Naive thymus-derived CD4-positive, alpha-beta T cell (primary cell): ENCODE measurements at regions of chr3 and their contacts with region 1.

Region 1: DNA sequence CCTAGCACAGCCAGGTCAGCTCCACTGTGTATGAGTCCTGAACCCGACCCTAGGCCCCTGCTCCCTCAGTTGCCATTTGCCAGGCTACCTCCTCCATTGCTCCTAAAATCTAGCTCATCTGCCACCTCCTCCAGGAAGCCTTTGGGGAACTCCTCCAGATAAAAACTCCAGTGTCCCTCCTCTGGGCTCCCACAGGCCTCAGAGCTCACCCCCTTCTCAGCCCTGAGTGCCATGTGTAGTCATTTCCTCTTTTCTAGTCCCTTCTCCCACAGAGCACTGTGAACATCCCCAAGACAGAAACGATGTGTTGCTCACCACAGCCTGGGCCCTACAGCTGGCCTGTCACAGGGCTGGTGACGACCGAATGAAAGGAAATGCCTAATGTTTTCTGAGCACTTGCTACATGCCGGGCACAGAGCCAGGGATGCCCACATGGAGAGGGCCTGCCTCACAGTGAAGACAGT is 61.0 kb downstream of the IQSEC1 start:
- DNase-seq: peak in 2 of 9 donors; percentile 24 to 52
- ATAC-seq: peak; percentile 60
- H3K4me3 ChIP-seq: peak overlapping the region; percentile 38
- H3K4me3 Mint-ChIP-seq: peak overlapping the region; percentile 69 to 96 (median 84)
- H3K27ac ChIP-seq: peak overlapping the region; percentile 99
- H3K27ac Mint-ChIP-seq: peak overlapping the region; percentile 96 to 100 (median 98)
- H3K4me1 ChIP-seq: peaks cover 84 to 90% of the 10 kb centered on the region in 2 donors
- H3K4me1 Mint-ChIP-seq: peaks cover 72 to 92% (median 77%) of the 10 kb centered on the region in 7 donors
- H3K27me3 ChIP-seq: no peaks in the 10 kb centered on the region
- H3K27me3 Mint-ChIP-seq: no peaks in the 10 kb centered on the region

Region 2: DNA sequence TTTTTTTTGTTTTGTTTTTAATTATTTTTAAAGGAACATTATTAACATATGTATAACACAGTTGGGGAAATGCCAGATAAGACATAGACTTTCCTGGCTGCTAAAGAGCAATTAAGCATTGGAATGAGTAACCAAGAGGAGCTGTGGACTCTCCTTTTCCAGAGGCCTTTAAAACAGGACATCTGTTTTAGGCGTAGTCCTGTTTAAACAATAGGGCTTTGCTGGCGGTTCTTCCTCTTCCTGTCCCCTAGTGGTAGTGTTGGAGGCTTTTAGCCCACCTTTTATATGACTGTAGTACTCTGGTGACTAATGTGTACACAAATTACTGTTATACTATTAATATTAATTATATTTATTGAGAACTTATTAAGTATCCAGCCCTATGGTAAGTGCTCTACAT is 641.5 kb before region 1 on chr3:
- CTCF ChIA-PET with region 1: no interaction called
- POLR2A ChIA-PET with region 1: no interaction called
- intact Hi-C with region 1: no loop called
- DNase-seq: no peak
- ATAC-seq: no peak
- H3K4me3 ChIP-seq: no peak overlapping the region
- H3K4me3 Mint-ChIP-seq: no peak overlapping the region
- H3K27ac ChIP-seq: no peak overlapping the region
- H3K27ac Mint-ChIP-seq: no peak overlapping the region
- H3K4me1 ChIP-seq: no peaks in the 10 kb centered on the region
- H3K4me1 Mint-ChIP-seq: no peaks in the 10 kb centered on the region
- H3K27me3 ChIP-seq: no peaks in the 10 kb centered on the region
- H3K27me3 Mint-ChIP-seq: peaks cover 24 to 32% (median 28%) of the 10 kb centered on the region in 5 donors

Region 3: DNA sequence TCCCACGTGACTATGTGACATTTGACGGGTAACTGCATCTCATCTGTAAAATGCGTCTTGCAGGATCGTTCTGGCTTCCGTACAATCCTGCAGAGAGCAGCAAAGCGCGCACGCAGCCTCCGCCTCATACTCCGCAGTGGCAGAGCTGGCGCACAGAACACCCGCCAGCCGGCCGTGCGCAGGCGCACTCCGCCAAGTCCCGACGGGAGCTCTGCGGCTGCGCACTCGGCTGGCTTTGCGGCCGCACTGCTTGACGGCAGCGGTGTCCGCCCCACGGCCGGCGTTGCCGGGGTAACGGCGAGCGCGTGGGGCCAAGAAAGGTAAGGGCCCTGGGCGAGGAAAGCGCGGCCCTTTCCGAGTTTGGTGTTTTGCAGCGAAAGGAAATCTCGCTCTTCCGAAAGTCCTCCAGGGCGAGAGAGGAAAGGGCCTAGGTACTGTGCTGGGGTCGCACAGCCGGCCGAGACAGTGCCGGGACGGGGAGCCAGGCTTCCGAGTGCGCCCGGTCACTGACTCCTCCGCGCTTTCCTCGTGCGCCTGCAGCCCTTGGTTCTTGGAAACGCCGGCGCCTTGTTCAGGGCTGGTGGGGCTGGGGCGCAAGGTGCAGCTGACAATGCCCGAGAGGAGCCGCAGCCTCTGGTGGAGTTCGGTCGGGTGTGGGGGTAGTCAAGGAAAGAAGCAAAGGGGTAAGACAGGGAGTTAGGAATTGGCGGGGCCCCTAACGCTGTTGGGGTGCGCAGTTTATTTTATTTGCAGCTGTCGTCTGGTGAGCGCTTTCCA is 527.9 kb before region 1 on chr3 and contains the start of gene TSEN2:
- CTCF ChIA-PET with region 1: no interaction called
- POLR2A ChIA-PET with region 1: no interaction called
- intact Hi-C with region 1: loop called in 1 of 2 experiments (anchors 10 kb)
- DNase-seq: peak; percentile 95 to 100 (median 98)
- ATAC-seq: peak; percentile 96
- H3K4me3 ChIP-seq: peak within 1 kb of the TSS; percentile 76
- H3K4me3 Mint-ChIP-seq: peak within 1 kb of the TSS; percentile 87 to 99 (median 97)
- H3K27ac ChIP-seq: peak within 1 kb of the TSS; percentile 92
- H3K27ac Mint-ChIP-seq: peak within 1 kb of the TSS; percentile 96 to 99 (median 98)
- H3K4me1 ChIP-seq: peaks cover 17% of the 10 kb centered on the region in 2 donors
- H3K4me1 Mint-ChIP-seq: peaks cover 21 to 65% (median 44%) of the 10 kb centered on the region in 7 donors
- H3K27me3 ChIP-seq: no peaks in the 10 kb centered on the region
- H3K27me3 Mint-ChIP-seq: peaks cover 0 to 2% (median 0%) of the 10 kb centered on the region in 5 donors
- total RNA-seq, gene TSEN2: 12.1 to 27.5 (median 13.6) TPM

Region 4: GRCh38 chr3:12994607-12995388 is 17.5 kb before region 1 on chr3:
- CTCF ChIA-PET with region 1: interaction called, 23 read pairs
- POLR2A ChIA-PET with region 1: interaction called, 41 read pairs
- intact Hi-C with region 1: loop called (anchors 1 kb)
- DNase-seq: peak; percentile 76 to 92 (median 83)
- ATAC-seq: peak; percentile 86
- H3K4me3 ChIP-seq: peak overlapping the region; percentile 69
- H3K4me3 Mint-ChIP-seq: peak overlapping the region; percentile 91 to 97 (median 95)
- H3K27ac ChIP-seq: peak overlapping the region; percentile 77
- H3K27ac Mint-ChIP-seq: peak overlapping the region; percentile 85 to 96 (median 90)
- H3K4me1 ChIP-seq: peaks cover 20 to 30% of the 10 kb centered on the region in 2 donors
- H3K4me1 Mint-ChIP-seq: peaks cover 23 to 80% (median 71%) of the 10 kb centered on the region in 7 donors
- H3K27me3 ChIP-seq: no peaks in the 10 kb centered on the region
- H3K27me3 Mint-ChIP-seq: peaks cover 0 to 5% (median 0%) of the 10 kb centered on the region in 5 donors

Region 5: DNA sequence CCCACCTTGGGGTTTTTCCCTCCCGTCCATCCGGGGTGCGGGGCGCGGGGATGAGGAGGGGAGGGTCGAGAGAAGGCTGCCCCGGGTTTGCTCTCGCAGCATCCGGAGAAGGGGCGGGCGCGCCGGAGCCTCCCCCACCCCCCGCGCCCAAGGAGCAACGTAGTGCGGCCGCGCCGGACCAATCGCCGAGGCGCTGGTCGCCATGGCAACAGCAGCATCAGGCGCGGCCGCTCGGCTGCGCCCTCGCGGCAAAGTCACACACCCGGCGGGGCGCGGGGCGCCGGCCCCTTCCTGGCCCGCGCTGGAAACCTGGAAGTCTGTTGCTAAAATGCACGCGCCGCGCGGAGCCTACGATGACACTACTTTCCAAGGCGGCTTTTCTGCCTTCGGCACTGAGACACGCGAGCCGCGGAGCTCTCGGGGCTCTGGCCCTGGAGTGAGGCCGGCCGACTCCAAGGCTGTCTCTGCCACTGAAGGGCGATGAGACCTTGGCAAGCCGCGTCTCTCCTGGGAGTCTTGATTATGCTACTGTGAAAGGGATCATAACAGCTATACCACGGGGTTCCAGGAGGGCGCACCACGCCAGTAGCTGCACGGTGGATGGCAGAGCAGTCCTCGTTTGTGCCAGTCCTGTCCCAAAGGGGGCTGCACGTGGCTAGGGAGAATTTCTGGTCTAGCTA is 61.2 kb after region 1 on chr3 and contains the start of gene IQSEC1:
- CTCF ChIA-PET with region 1: no interaction called
- POLR2A ChIA-PET with region 1: interaction called, 3 read pairs
- intact Hi-C with region 1: loop called (anchors 1 kb)
- DNase-seq: peak; percentile 15 to 70 (median 51)
- ATAC-seq: peak; percentile 80
- H3K4me3 ChIP-seq: peak within 1 kb of the TSS; percentile 53
- H3K4me3 Mint-ChIP-seq: peak within 1 kb of the TSS; percentile 59 to 86 (median 77)
- H3K27ac ChIP-seq: no peak within 1 kb of the TSS
- H3K27ac Mint-ChIP-seq: peak within 1 kb of the TSS in 6 of 9 donors; percentile 36 to 77 (median 60)
- H3K4me1 ChIP-seq: peaks cover 28 to 35% of the 10 kb centered on the region in 2 donors
- H3K4me1 Mint-ChIP-seq: peaks cover 18 to 46% (median 39%) of the 10 kb centered on the region in 7 donors
- H3K27me3 ChIP-seq: peaks cover 0 to 3% of the 10 kb centered on the region in 2 donors
- H3K27me3 Mint-ChIP-seq: peaks cover 8 to 45% (median 12%) of the 10 kb centered on the region in 5 donors
- total RNA-seq, gene IQSEC1: 51.8 to 163 (median 79.5) TPM

Region 6: GRCh38 chr3:13419505-13420044 is 407.3 kb after region 1 on chr3:
- CTCF ChIA-PET with region 1: no interaction called
- POLR2A ChIA-PET with region 1: interaction called, 3 read pairs
- intact Hi-C with region 1: loop called (anchors 1 to 5 kb)
- DNase-seq: peak; percentile 58 to 69 (median 64)
- ATAC-seq: peak; percentile 74
- H3K4me3 ChIP-seq: peak overlapping the region; percentile 70
- H3K4me3 Mint-ChIP-seq: peak overlapping the region; percentile 77 to 100 (median 90)
- H3K27ac ChIP-seq: peak overlapping the region; percentile 96
- H3K27ac Mint-ChIP-seq: peak overlapping the region; percentile 83 to 97 (median 92)
- H3K4me1 ChIP-seq: peaks cover 55 to 60% of the 10 kb centered on the region in 2 donors
- H3K4me1 Mint-ChIP-seq: peaks cover 41 to 81% (median 69%) of the 10 kb centered on the region in 7 donors
- H3K27me3 ChIP-seq: no peaks in the 10 kb centered on the region
- H3K27me3 Mint-ChIP-seq: no peaks in the 10 kb centered on the region

Region 7: GRCh38 chr3:13584427-13585300 is 572.4 kb after region 1 on chr3:
- CTCF ChIA-PET with region 1: no interaction called
- POLR2A ChIA-PET with region 1: no interaction called
- intact Hi-C with region 1: no loop called
- DNase-seq: no peak
- ATAC-seq: no peak
- H3K4me3 ChIP-seq: no peak overlapping the region
- H3K4me3 Mint-ChIP-seq: no peak overlapping the region
- H3K27ac ChIP-seq: no peak overlapping the region
- H3K27ac Mint-ChIP-seq: no peak overlapping the region
- H3K4me1 ChIP-seq: no peaks in the 10 kb centered on the region
- H3K4me1 Mint-ChIP-seq: no peaks in the 10 kb centered on the region
- H3K27me3 ChIP-seq: no peaks in the 10 kb centered on the region
- H3K27me3 Mint-ChIP-seq: no peaks in the 10 kb centered on the region

Region 8: DNA sequence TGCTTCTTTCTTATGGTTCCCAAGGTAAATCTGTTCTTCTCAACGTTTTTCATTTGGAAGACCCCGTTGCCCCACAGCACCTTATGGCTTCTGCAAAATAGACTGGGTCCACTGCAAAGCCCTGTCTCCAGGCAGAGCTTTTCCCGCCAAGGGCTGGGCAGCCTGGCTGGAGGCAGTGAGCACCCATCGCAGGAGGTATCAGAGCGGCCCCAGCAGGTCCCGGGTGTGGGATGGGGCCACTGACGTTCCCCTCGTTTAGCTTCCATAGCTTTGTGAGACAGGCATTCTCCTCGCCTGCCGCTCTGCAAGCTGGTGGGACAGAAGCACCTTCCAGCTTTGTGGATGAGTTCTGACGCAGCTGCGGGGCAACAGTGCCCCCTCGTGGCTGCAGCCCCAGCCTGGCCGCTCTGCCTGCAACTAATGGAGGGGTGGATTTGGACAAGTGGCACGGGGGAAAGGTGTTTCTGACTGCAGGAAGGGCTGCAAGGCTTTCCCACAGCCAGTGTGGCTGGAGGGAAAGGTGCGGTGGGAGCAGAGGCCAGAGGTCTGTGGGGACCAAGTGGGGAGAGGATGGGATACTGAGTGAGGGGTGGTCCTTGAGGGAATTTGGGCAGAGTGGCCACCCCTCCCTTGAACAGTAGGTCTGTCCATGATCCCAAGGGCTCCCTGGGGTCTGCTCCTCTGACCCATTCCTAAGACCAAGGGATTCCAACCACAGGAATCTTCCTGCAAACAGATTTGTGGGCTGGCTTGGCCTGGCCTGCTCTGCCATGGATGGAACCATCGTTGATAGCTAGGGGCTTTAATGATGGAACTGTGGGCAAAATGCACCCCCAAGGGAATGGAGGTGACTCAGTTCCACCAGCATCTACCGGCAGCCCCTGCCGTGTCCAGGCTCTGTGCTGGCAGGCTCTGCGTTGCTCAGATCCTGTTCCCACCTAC is 636.1 kb after region 1 on chr3:
- CTCF ChIA-PET with region 1: interaction called, 3 read pairs
- POLR2A ChIA-PET with region 1: no interaction called
- intact Hi-C with region 1: loop called in 1 of 2 experiments (anchors 10 kb)
- DNase-seq: peak; percentile 50 to 82 (median 72)
- ATAC-seq: peak; percentile 62
- H3K4me3 ChIP-seq: no peak overlapping the region
- H3K4me3 Mint-ChIP-seq: peak overlapping the region in 7 of 10 donors; percentile 17 to 64 (median 41)
- H3K27ac ChIP-seq: no peak overlapping the region
- H3K27ac Mint-ChIP-seq: peak overlapping the region in 2 of 9 donors; percentile 57 to 87
- H3K4me1 ChIP-seq: peaks cover 9 to 12% of the 10 kb centered on the region in 2 donors
- H3K4me1 Mint-ChIP-seq: peaks cover 14 to 40% (median 23%) of the 10 kb centered on the region in 7 donors
- H3K27me3 ChIP-seq: no peaks in the 10 kb centered on the region
- H3K27me3 Mint-ChIP-seq: peaks cover 15 to 48% (median 20%) of the 10 kb centered on the region in 5 donors

Region 9: DNA sequence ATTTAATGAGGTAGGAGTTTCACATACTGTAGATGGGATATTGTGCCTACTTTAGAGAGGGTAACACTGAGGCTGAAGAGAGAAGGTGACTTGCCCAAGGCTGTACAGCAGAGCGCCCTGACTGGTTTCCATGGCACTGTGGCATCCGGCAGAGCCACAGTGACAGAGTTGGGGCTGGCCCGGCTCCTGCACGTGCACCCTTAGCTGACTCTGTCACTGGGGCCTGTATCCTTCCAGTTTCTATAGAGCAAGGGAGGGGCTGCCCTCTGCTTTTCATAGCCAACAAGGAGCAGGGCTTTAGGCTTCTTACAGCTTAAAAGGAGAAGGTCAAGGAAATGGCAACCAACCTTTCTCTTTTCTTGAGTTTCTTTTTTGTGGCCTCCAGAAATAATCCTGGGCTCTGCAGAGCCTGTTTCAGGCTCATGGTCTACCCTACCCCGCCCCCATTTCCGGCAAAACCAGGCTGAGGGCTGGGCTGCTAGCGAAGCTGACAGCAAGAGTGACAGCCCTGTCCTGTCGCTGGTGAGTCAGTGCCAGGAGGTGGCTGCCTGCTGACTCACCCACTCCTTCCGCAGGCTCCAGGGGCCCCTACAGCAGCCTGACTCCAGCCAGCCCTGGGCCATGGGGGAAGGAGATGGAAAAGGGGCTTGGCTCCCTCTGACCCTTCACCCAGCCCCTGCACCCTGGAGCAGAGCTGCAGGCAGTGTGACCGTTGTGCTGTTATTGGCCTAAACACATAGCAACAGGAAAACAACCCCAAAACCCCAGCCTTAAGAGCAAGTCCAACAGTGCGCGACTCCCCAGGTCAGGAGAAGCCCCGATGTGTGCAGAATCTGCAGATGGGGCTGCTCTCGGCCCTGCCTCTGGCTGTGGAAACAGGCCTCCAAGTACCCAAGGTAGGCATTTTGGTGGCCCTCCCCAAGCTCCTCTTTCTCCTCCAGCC is 1419.9 kb after region 1 on chr3:
- CTCF ChIA-PET with region 1: no interaction called
- POLR2A ChIA-PET with region 1: no interaction called
- intact Hi-C with region 1: loop called in 1 of 2 experiments (anchors 5 kb)
- DNase-seq: peak; percentile 73 to 94 (median 91)
- ATAC-seq: peak; percentile 89
- H3K4me3 ChIP-seq: peak overlapping the region; percentile 53
- H3K4me3 Mint-ChIP-seq: peak overlapping the region; percentile 51 to 90 (median 78)
- H3K27ac ChIP-seq: peak overlapping the region; percentile 84
- H3K27ac Mint-ChIP-seq: peak overlapping the region; percentile 87 to 100 (median 98)
- H3K4me1 ChIP-seq: peaks cover 55 to 81% of the 10 kb centered on the region in 2 donors
- H3K4me1 Mint-ChIP-seq: peaks cover 57 to 85% (median 75%) of the 10 kb centered on the region in 7 donors
- H3K27me3 ChIP-seq: no peaks in the 10 kb centered on the region
- H3K27me3 Mint-ChIP-seq: no peaks in the 10 kb centered on the region